ENCODE measurements at regions of chr21 and their contacts with region 1.

Region 1: DNA sequence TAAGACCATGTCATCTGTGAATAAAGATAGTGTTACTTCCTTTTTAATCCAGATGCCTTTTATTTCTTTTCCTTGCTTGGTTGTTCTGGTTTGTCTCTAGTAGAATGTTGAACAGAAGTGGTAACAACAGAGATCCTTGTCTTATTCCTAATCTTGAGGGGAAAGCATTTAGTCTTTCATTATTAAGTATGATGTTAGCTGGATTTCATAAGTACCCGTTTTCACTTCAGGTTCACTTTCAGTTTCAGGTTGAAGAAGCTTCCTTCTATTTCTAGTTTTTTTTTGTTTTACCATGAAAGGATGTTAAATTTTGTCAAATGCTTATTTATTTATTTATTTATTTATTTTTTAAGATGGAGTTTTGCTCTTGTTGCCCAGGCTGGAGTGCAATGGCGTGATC is 22.3 kb upstream of the AGPAT3 start:
- DNase-seq: no peak
- H3K4me3 Mint-ChIP-seq: peak overlapping the region; percentile 55
- H3K27ac Mint-ChIP-seq: peak overlapping the region; percentile 30
- H3K4me1 Mint-ChIP-seq: peaks cover 14% of the 10 kb centered on the region
- H3K27me3 Mint-ChIP-seq: peaks cover 14% of the 10 kb centered on the region

Region 2: DNA sequence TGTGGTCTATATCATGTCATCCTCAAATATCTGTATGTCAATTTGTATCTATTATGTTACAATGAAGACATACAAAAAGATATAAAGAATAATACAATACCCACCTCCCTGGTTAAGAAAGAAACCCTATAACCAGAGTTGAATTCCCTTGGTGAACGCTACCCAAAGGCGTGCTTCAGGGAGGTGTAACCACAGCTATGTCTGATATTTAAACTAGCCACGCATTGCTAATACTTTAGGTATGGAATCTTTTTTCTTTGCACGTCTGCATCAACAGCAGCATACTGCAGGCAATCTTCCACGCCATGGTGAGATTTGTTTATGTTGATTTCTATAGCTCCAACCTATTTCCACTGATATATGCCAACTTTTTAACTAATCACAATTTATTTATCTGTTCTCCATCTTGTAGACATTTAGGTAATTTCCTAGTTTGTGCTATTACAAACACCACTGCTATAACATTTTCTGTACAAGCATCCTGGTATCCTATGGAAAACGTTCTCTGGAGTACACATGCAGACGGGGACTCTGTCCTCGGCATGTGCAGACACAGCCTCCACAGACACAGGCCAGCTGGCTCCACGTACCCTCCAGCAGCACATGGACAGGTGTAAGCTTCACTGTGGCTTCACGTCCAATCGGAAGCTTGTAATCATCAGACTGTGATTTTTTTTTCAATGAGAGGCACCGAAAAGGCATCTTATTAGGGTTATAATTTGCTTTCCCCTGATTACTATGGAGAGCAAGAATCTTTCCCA is 241.9 kb before region 1 on chr21:
- intact Hi-C with region 1: no loop called
- DNase-seq: no peak
- H3K4me3 Mint-ChIP-seq: no peak overlapping the region
- H3K27ac Mint-ChIP-seq: no peak overlapping the region
- H3K4me1 Mint-ChIP-seq: peaks cover 10% of the 10 kb centered on the region
- H3K27me3 Mint-ChIP-seq: peaks cover 5% of the 10 kb centered on the region

Region 3: DNA sequence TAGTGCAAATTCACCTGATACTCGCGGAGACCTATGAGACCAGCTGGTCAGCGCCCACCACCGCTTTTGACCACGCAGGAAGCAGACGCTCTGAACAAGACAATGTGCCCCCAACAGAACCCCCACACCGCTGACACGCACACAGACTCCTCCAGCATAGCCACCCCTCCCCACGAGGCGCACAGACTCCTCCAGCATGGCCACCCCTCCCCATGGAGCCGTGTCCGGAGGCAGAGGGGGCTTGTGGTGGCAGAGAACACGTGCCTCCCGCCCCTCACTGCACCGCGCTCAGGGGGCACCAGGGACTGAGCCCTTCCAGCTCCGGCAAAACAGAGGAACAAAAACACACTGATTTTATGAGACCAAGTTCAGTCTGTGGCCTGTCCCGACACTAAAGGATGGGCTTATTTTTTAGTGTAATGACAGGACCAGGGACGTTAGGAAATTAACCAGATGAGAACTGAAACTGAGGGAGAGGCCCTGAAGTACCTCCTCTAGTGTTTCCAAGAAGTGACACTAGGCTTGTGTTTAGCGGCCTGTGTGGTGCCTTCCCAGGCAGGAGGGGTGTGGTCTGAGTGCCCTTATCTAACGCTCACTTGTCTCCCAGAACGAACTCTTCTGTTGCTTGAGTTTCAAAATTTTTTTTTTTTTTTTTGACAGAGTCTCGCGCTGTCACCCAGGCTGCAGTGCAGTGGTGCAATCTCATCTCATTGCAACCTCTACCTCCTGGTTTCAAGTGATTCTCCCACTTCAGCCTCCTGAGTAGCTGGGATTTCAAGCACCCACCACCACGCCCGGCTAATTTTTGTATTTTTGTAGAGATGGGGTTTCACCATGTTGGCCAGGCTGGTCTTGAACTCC is 12.3 kb after region 1 on chr21:
- intact Hi-C with region 1: loop called (anchors 1 kb)
- DNase-seq: peak; percentile 92
- H3K4me3 Mint-ChIP-seq: peak overlapping the region; percentile 74
- H3K27ac Mint-ChIP-seq: peak overlapping the region; percentile 90
- H3K4me1 Mint-ChIP-seq: peaks cover 29% of the 10 kb centered on the region
- H3K27me3 Mint-ChIP-seq: no peaks in the 10 kb centered on the region

Region 4: DNA sequence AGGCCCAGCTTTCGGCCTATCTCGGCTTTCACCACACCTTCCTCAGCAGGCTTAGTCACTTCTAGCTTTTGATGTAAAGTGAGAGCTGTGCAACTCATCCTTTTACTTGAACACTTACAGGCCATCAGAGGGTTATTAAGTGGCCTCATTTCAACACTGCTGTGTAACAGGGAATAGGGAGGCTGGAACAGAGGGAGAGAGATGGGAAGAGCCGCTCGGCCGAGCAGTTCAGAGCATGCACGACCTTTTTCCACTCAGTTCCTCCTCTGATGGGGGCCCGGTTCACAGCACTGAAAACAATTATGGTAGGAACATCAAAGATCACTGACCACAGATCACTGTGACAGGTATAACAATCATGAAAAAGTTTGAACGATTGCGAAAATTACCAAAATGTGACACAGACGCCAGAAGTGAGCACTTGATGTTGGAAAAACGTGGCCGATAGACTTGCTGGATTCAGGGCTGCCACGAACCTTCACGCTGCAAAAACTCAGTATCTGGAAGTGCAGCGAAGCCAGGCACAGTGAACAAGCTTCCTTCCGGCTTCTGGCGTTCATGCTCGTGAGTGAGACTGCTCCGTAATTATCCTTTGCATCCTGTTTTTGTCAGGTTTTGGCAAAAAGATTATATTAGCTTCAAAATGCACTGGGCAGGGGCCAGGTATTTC is 50.9 kb after region 1 on chr21:
- intact Hi-C with region 1: loop called (anchors 1 kb)
- DNase-seq: peak; percentile 72
- H3K4me3 Mint-ChIP-seq: peak overlapping the region; percentile 56
- H3K27ac Mint-ChIP-seq: peak overlapping the region; percentile 80
- H3K4me1 Mint-ChIP-seq: peaks cover 31% of the 10 kb centered on the region
- H3K27me3 Mint-ChIP-seq: no peaks in the 10 kb centered on the region

Region 5: GRCh38 chr21:43984905-43985689 is 142.4 kb after region 1 on chr21:
- intact Hi-C with region 1: no loop called
- DNase-seq: no peak
- H3K4me3 Mint-ChIP-seq: no peak overlapping the region
- H3K27ac Mint-ChIP-seq: no peak overlapping the region
- H3K4me1 Mint-ChIP-seq: peaks cover 12% of the 10 kb centered on the region
- H3K27me3 Mint-ChIP-seq: peaks cover 3% of the 10 kb centered on the region

Measured in activated CD4-positive, alpha-beta T cell treated with anti-CD3 and anti-CD28 coated beads, Interleukin-2, amount 10 ng/mL, durations not matched to agents 24 days and 14 days (primary cell).